ENCODE measurements at regions of chr9 and their contacts with region 1.

Region 1: DNA sequence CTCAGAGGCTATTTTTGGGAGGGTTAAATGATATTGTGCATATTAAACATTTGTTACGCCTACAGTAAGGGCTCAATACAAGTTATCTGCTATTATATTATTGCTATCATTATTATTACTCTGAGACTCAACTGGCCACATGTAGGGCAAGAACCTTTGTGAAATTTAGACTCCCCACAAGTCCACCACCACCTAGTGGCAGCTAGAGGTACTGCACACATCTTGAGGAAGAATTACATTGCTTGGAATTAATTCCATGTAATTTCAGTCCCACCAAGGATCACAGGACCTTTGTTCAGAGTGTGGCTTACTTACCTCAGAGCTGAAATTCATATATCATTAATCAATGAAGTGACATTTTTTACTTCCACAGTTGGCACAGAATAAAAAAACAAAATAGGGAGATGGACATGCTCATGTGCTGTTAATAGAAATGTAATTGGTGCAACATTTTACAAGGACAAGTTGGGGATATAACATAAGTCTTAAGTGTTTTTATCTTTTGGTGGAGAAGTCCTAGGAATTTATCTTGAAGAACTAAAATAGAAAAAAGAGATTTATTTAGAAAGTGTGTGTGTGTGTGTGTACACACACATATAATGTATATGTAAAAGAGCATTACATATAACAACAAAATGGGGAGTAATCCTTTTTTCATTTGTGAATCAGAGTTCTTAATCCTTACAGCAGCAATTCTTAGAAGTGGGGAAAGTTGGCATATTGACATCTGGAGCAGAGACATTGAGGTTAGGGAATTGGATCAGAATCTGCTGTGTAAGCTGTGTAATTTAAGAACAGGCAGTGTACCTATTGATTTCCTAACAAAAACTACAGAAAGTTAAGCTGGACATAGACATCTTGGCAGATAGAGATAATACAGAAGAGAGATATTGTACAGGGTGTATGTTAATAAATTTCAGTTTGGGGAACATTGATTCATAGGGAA is 11.2 kb downstream of the MSANTD3 start:
- DNase-seq: peak; percentile 78
- ATAC-seq: peak; percentile 47
- H3K4me3 Mint-ChIP-seq: no peak overlapping the region
- H3K27ac Mint-ChIP-seq: no peak overlapping the region
- H3K4me1 Mint-ChIP-seq: no peaks in the 10 kb centered on the region
- H3K27me3 Mint-ChIP-seq: no peaks in the 10 kb centered on the region

Region 2: GRCh38 chr9:99162759-99163364 is 1275.3 kb before region 1 on chr9:
- CTCF ChIA-PET with region 1: no interaction called
- POLR2A ChIA-PET with region 1: no interaction called
- intact Hi-C with region 1: loop called in 1 of 2 experiments (anchors 5 kb)
- DNase-seq: no peak
- ATAC-seq: peak; percentile 35
- H3K4me3 Mint-ChIP-seq: no peak overlapping the region
- H3K27ac Mint-ChIP-seq: no peak overlapping the region
- H3K4me1 Mint-ChIP-seq: peaks cover 22% of the 10 kb centered on the region
- H3K27me3 Mint-ChIP-seq: peaks cover 8% of the 10 kb centered on the region

Region 3: GRCh38 chr9:100028201-100028784 is 409.8 kb before region 1 on chr9:
- CTCF ChIA-PET with region 1: no interaction called
- POLR2A ChIA-PET with region 1: no interaction called
- intact Hi-C with region 1: loop called in 1 of 2 experiments (anchors 5 kb)
- DNase-seq: peak; percentile 82
- ATAC-seq: peak; percentile 93
- H3K4me3 Mint-ChIP-seq: no peak overlapping the region
- H3K27ac Mint-ChIP-seq: no peak overlapping the region
- H3K4me1 Mint-ChIP-seq: peaks cover 3% of the 10 kb centered on the region
- H3K27me3 Mint-ChIP-seq: no peaks in the 10 kb centered on the region

Region 4: DNA sequence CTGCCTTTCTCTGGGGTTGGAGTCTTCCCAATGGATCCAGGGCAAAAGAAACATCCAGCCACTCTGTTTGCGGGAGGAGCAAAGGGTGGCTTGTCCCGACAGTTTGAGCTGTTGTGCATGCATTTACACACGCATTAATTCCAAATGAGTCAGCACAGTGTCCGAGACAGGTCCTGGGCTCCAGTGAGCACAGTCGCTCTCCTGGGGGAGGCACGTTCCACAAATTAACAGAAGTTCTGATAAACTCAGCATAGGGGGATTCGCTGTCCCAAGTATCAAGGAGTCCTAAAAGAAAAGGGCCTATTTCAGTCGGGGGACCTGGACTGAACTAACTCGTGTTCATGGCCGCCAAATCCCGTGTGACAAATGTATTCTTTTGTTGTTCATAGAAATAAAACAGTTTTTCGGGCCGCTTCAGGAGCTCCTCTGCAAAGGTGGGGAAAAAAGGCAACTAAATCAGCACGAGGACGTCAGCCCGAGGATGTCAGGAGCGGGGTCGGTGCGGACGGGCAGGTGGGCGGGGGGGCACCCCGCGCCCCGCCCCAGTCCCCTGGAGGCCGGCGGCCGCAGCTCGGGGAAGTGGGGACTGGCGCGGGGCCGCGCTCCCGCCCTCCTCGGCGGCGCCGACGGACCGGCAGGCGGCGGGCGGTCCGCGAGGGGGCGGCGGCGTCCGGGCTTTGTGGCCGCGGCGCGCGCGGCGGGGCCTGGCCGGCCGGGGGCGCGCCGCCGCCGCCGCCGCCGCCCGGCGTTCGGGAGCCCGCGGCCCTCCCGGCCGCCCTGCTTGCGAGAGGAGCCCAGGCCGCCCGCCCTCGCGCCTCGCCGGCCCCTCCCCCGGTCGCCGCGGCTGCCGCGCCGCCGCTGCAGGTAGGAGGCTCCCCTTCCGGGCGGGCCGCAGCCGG is 11.4 kb before region 1 on chr9 and contains the start of gene MSANTD3:
- CTCF ChIA-PET with region 1: interaction called, 11 read pairs
- POLR2A ChIA-PET with region 1: no interaction called
- intact Hi-C with region 1: no loop called
- DNase-seq: peak; percentile 71
- ATAC-seq: peak; percentile 74
- H3K4me3 Mint-ChIP-seq: peak within 1 kb of the TSS; percentile 81
- H3K27ac Mint-ChIP-seq: peak within 1 kb of the TSS; percentile 91
- H3K4me1 Mint-ChIP-seq: peaks cover 30% of the 10 kb centered on the region
- H3K27me3 Mint-ChIP-seq: no peaks in the 10 kb centered on the region
- total RNA-seq, gene MSANTD3: 17.9 to 21.6 TPM

Region 5: DNA sequence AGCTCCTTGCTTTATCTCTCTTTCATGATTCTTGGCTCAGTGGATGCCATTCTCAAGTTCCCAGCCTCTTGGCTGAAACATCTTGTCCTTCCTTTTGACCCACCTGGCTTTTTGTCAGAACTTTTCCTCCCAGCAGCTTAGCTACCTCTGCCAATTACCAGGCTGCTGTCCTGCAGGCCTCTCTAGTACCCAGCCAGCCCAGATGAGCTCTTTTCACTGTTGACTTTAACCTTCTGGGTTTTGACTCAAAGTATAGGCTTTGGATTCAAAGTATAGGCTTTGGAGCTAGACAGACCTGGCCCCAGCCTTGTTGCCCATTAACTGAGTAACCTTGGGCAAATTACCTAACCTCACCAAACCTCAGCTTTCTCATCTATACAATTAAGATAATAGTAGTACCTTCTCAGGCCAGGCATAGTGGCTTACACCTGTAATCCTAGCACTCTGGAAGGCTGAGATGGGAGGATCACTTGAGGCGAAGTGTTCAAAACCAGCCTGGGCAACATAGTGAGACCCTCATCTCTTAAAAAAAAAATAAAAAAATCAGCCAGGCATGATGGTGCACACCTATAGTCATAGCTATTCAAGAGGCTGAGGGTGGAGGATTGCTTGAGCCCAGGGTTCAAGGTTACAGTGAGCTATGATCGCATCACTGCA is 28.2 kb after region 1 on chr9:
- CTCF ChIA-PET with region 1: interaction called, 13 read pairs
- POLR2A ChIA-PET with region 1: no interaction called
- intact Hi-C with region 1: no loop called
- DNase-seq: no peak
- ATAC-seq: no peak
- H3K4me3 Mint-ChIP-seq: no peak overlapping the region
- H3K27ac Mint-ChIP-seq: no peak overlapping the region
- H3K4me1 Mint-ChIP-seq: no peaks in the 10 kb centered on the region
- H3K27me3 Mint-ChIP-seq: peaks cover 5% of the 10 kb centered on the region

Measured in activated CD4-positive, alpha-beta T cell treated with anti-CD3 and anti-CD28 coated beads for 36 hours (primary cell).